IMR-90 (cell line): ENCODE measurements at regions of chr7 and their contacts with region 1.

Region 1: DNA sequence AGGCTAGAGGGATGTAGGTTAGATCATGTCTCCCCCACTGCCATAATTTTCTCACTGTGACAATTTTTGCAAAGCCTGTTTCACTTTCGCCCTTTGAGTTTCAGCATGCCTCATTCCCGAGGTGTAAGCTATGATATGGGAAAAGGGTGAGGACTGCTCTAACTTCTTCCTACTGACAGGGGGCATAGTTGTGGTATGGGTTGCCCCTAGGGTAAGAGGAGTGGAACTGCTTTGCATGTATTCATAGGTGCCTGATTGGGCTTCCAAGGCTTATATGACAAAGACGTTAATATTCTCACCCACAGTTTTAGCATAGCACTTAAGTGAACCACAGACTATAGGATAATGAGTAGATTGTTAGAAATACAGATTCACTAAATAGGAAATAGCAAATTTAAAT is 148.7 kb downstream of the BBS9 start:
- DNase-seq: no peak
- ATAC-seq: no peak
- H3K4me3 ChIP-seq: no peak overlapping the region
- H3K27ac ChIP-seq: no peak overlapping the region
- H3K4me1 ChIP-seq: no peaks in the 10 kb centered on the region
- H3K27me3 ChIP-seq: no peaks in the 10 kb centered on the region
- CTCF ChIP-seq: no peak
- POLR2A ChIP-seq: no peak
- RAD21 ChIP-seq: no peak

Region 2: GRCh38 chr7:33310541-33310940 is 32.4 kb after region 1 on chr7:
- CTCF ChIA-PET with region 1: no interaction called
- POLR2A ChIA-PET with region 1: no interaction called
- dilution Hi-C with region 1: no loop called
- in situ Hi-C with region 1: no loop called
- intact Hi-C with region 1: loop called (anchors 5 kb)
- DNase-seq: no peak
- ATAC-seq: peak; percentile 24; the same call in 1 of the 2 replicates
- H3K4me3 ChIP-seq: no peak overlapping the region
- H3K27ac ChIP-seq: no peak overlapping the region
- H3K4me1 ChIP-seq: 0 out of 2 replicates have a peak, but pooled peaks cover 1% of the 10 kb centered on the region
- H3K27me3 ChIP-seq: no peaks in the 10 kb centered on the region
- CTCF ChIP-seq: no peak
- POLR2A ChIP-seq: no peak
- RAD21 ChIP-seq: no peak